ENCODE measurements at regions of chr16 and their contacts with region 1.

Region 1: DNA sequence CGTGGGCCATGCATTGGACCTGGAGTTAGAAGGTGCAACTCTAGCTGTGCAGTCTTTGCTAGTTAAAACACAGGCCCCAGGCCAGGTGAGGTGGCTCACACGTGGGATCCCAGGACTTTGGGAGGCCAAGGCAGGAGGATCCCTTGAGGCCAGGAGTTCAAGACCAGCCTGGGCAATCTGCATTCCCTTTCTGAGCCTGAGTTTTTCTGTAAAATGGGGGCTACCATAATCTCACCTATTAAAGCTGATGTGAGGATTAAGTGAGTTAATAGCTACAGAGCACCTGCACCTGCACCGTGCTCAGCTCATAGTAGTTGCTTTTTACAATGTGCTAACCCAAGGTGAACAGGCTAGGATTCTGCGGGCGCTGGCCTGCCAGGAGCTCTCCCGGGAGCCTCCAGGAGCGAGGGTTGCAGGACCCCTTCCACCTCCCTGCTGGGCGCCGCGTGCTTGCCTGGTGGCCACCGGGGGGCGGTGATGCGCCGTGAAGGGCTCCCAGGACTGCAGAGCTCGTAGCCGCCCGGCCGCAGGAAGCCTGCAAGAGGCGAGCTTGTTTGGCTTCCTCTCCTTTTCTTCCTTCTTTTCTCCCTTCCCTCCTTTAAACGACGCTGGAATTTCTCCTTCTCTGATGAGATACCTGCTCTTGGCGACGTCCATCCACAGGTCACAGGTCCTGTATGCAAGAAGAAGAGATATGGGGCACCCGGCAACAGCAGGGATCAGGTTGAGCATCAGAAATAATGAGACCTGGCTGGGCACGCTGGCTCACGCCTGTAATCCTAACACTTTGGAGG is 51.3 kb downstream of the ZFP90 start:
- DNase-seq: peak; percentile 94
- ATAC-seq: peak; percentile 99
- H3K4me3 Mint-ChIP-seq: peak overlapping the region; percentile 34; the same call in 1 of the 2 replicates
- H3K27ac Mint-ChIP-seq: peak overlapping the region; percentile 71; the same call in 1 of the 2 replicates
- H3K4me1 Mint-ChIP-seq: peaks cover 11% of the 10 kb centered on the region
- H3K27me3 Mint-ChIP-seq: peaks cover 3% of the 10 kb centered on the region
- CTCF ChIP-seq: peak; percentile 81

Region 2: GRCh38 chr16:68448360-68448970 is 141.9 kb before region 1 on chr16 and contains the start of gene SMPD3:
- CTCF ChIA-PET with region 1: no interaction called
- POLR2A ChIA-PET with region 1: no interaction called
- DNase-seq: peak; percentile 100
- ATAC-seq: peak; percentile 94
- H3K4me3 Mint-ChIP-seq: peak within 1 kb of the TSS; percentile 85
- H3K27ac Mint-ChIP-seq: no peak within 1 kb of the TSS
- H3K4me1 Mint-ChIP-seq: peaks cover 10% of the 10 kb centered on the region
- H3K27me3 Mint-ChIP-seq: peaks cover 34% of the 10 kb centered on the region
- CTCF ChIP-seq: no peak
- total RNA-seq, gene SMPD3: 0.99 to 1.4 TPM (median 1.2 TPM) in 3 replicates

Region 3: GRCh38 chr16:68528686-68529379 is 61.6 kb before region 1 on chr16:
- CTCF ChIA-PET with region 1: interaction called, 74 read pairs
- POLR2A ChIA-PET with region 1: no interaction called
- DNase-seq: peak; percentile 91
- ATAC-seq: peak; percentile 81
- H3K4me3 Mint-ChIP-seq: peak overlapping the region; percentile 78
- H3K27ac Mint-ChIP-seq: no peak overlapping the region
- H3K4me1 Mint-ChIP-seq: peaks cover 15% of the 10 kb centered on the region
- H3K27me3 Mint-ChIP-seq: peaks cover 50% of the 10 kb centered on the region
- CTCF ChIP-seq: peak; percentile 98

Region 4: DNA sequence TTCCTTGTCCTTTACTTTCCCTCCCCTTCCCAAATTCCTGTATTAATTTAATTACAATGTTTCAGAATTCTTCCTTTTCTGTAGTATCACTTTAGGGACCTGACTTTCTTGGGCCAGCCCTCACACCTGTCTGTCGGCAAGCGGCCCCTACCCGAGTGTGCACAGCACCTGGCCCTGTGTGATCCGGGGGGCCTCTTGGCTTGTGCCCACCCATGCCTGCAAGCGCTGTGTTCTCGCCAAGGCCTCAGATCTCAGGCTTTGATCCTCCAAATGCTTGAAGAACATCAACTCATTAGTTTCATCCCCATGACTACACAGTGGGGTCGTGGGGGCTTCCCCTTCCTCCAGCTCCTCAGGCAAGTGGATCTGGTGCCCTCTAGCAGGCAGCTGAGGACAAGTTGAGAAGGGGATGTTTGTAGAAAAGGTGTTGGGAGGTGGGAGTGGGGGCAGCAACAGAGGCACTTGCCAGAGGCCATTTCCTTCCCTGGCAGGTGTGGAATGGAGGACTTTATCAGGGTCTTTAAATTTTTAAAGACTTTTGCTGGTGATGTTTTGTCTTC is 39.0 kb after region 1 on chr16:
- CTCF ChIA-PET with region 1: interaction called, 14 read pairs
- POLR2A ChIA-PET with region 1: no interaction called
- DNase-seq: peak; percentile 37
- ATAC-seq: peak; percentile 96
- H3K4me3 Mint-ChIP-seq: no peak overlapping the region
- H3K27ac Mint-ChIP-seq: peak overlapping the region; percentile 13; the same call in 1 of the 2 replicates
- H3K4me1 Mint-ChIP-seq: peaks cover 21% of the 10 kb centered on the region
- H3K27me3 Mint-ChIP-seq: no peaks in the 10 kb centered on the region; the same call in 1 of the 2 replicates
- CTCF ChIP-seq: no peak

Region 5: GRCh38 chr16:68668266-68668665 is 77.9 kb after region 1 on chr16:
- CTCF ChIA-PET with region 1: interaction called, 12 read pairs
- POLR2A ChIA-PET with region 1: no interaction called
- DNase-seq: no peak
- ATAC-seq: no peak
- H3K4me3 Mint-ChIP-seq: no peak overlapping the region
- H3K27ac Mint-ChIP-seq: peak overlapping the region; percentile 43
- H3K4me1 Mint-ChIP-seq: peaks cover 25% of the 10 kb centered on the region
- H3K27me3 Mint-ChIP-seq: no peaks in the 10 kb centered on the region
- CTCF ChIP-seq: no peak

Region 6: DNA sequence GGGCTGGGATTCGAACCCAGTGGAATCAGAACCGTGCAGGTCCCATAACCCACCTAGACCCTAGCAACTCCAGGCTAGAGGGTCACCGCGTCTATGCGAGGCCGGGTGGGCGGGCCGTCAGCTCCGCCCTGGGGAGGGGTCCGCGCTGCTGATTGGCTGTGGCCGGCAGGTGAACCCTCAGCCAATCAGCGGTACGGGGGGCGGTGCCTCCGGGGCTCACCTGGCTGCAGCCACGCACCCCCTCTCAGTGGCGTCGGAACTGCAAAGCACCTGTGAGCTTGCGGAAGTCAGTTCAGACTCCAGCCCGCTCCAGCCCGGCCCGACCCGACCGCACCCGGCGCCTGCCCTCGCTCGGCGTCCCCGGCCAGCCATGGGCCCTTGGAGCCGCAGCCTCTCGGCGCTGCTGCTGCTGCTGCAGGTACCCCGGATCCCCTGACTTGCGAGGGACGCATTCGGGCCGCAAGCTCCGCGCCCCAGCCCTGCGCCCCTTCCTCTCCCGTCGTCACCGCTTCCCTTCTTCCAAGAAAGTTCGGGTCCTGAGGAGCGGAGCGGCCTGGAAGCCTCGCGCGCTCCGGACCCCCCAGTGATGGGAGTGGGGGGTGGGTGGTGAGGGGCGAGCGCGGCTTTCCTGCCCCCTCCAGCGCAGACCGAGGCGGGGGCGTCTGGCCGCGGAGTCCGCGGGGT is 146.8 kb after region 1 on chr16 and contains the start of gene CDH1:
- CTCF ChIA-PET with region 1: interaction called, 12 read pairs
- POLR2A ChIA-PET with region 1: no interaction called
- DNase-seq: peak; percentile 99
- ATAC-seq: peak; percentile 97
- H3K4me3 Mint-ChIP-seq: peak within 1 kb of the TSS; percentile 99
- H3K27ac Mint-ChIP-seq: peak within 1 kb of the TSS; percentile 100
- H3K4me1 Mint-ChIP-seq: peaks cover 56% of the 10 kb centered on the region
- H3K27me3 Mint-ChIP-seq: no peaks in the 10 kb centered on the region
- CTCF ChIP-seq: no peak
- total RNA-seq, gene CDH1: 265 to 281 TPM (median 278 TPM) in 3 replicates

Measured in WTC11 (cell line).